ENCODE measurements at regions of chr1 and their contacts with region 1.

Region 1: GRCh38 chr1:167936068-167936929 is at the start of gene DCAF6:
- DNase-seq: peak; percentile 98
- ATAC-seq: peak; percentile 85
- H3K4me3 ChIP-seq: peak within 1 kb of the TSS; percentile 79 to 87
- H3K27ac ChIP-seq: peak within 1 kb of the TSS; percentile 76
- H3K4me1 ChIP-seq: peaks cover 10 to 24% of the 10 kb centered on the region in 2 experiments; a peak in 3 of 4 replicates
- H3K27me3 ChIP-seq: no peaks in the 10 kb centered on the region
- CTCF ChIP-seq: no peak
- POLR2A ChIP-seq: peak; percentile 83
- RAD21 ChIP-seq: no peak
- total RNA-seq, gene DCAF6: 34.2 TPM

Region 2: DNA sequence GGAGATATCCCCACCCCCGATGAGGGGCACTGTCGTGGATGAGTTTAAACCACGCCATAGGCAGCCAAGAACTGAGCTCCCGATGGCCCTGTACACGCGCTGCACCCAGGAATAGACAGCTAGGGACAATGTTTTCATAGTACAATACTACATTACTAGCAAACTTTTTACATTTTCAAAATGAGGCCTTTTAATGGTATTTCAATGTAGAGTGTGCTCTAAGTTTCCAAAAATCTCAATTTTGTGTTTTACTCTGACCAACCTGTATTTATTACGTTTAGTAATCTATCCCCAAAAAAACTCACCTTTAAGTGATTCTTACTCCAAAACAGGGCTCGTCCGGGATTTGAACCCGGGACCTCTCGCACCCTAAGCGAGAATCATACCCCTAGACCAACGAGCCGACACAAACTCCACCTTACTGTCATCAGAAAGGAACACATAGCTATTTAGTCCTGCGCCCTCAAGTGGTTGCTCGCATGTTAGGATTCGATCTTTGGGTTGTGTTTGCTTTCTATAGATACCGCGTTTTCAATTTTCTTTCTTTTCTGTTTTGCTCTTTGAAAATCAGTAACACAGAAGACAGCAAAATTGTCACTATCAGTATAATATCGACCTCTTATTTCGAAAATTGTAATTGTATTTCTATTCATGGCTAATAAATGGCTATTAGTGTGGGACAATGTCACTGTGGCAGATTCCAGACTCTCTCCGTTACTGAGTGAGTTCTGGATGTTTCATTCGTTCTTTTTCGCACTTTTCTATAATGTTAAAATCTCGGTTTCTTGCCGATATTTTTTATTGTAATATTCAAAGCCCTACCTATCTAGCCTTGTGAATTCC is 220.9 kb before region 1 on chr1:
- CTCF ChIA-PET with region 1: interaction called, 5 read pairs
- POLR2A ChIA-PET with region 1: interaction called, 4 read pairs
- RAD21 ChIA-PET with region 1: no interaction called
- intact Hi-C with region 1: loop called (anchors 2 kb)
- DNase-seq: peak; percentile 86
- ATAC-seq: peak; percentile 57
- H3K4me3 ChIP-seq: peak overlapping the region; percentile 52 to 58
- H3K27ac ChIP-seq: peak overlapping the region; percentile 67
- H3K4me1 ChIP-seq: peaks cover 10 to 32% of the 10 kb centered on the region in 2 experiments
- H3K27me3 ChIP-seq: no peaks in the 10 kb centered on the region
- CTCF ChIP-seq: peak in 2 of 3 experiments; percentile 86; a peak in 4 of 6 replicates
- POLR2A ChIP-seq: no peak
- RAD21 ChIP-seq: no peak

Measured in HCT116 (cell line).